ENCODE measurements at regions of chrX and their contacts with region 1.

Region 1: GRCh38 chrX:154748712-154749343 is 2.0 kb downstream of the GAB3 start:
- DNase-seq: peak; percentile 37 to 49 (median 43)
- ATAC-seq: peak; percentile 57 to 71 (median 62)
- H3K4me3 ChIP-seq: peak overlapping the region in 10 of 12 donors; percentile 49 to 81 (median 69)
- H3K27ac ChIP-seq: peak overlapping the region in 11 of 12 donors; percentile 26 to 95 (median 92)
- H3K4me1 ChIP-seq: peaks cover 0 to 29% (median 10%) of the 10 kb centered on the region in 12 donors
- H3K27me3 ChIP-seq: peaks cover 0 to 5% (median 0%) of the 10 kb centered on the region in 9 donors
- CTCF ChIP-seq: peak; percentile 58 to 88 (median 72)
- POLR2A ChIP-seq: no peak

Region 2: GRCh38 chrX:154695911-154696675 is 52.7 kb before region 1 on chrX:
- intact Hi-C with region 1: loop called in 5 of 10 experiments (anchors 5 to 10 kb)
- DNase-seq: peak in 2 of 5 donors; percentile 29
- ATAC-seq: peak; percentile 37 to 64 (median 50)
- H3K4me3 ChIP-seq: no peak overlapping the region
- H3K27ac ChIP-seq: peak overlapping the region in 11 of 12 donors; percentile 10 to 67 (median 51)
- H3K4me1 ChIP-seq: peaks cover 0 to 35% (median 14%) of the 10 kb centered on the region in 12 donors
- H3K27me3 ChIP-seq: peaks cover 0 to 4% (median 0%) of the 10 kb centered on the region in 9 donors
- CTCF ChIP-seq: no peak
- POLR2A ChIP-seq: no peak

Region 3: GRCh38 chrX:154714925-154715324 is 33.9 kb before region 1 on chrX:
- intact Hi-C with region 1: loop called in 5 of 10 experiments (anchors 2 to 5 kb)
- DNase-seq: no peak
- ATAC-seq: peak in 3 of 4 donors; percentile 59 to 73 (median 70)
- H3K4me3 ChIP-seq: no peak overlapping the region
- H3K27ac ChIP-seq: no peak overlapping the region
- H3K4me1 ChIP-seq: peaks cover 0 to 63% (median 35%) of the 10 kb centered on the region in 12 donors
- H3K27me3 ChIP-seq: peaks cover 0 to 6% (median 0%) of the 10 kb centered on the region in 9 donors
- CTCF ChIP-seq: peak; percentile 55 to 86 (median 70)
- POLR2A ChIP-seq: no peak

Region 4: GRCh38 chrX:154734061-154734781 is 14.6 kb before region 1 on chrX:
- intact Hi-C with region 1: loop called in 1 of 10 experiments (anchors 2 kb)
- DNase-seq: peak; percentile 33 to 65 (median 40)
- ATAC-seq: peak; percentile 13 to 60 (median 30)
- H3K4me3 ChIP-seq: peak overlapping the region in 1 of 12 donors; percentile 30
- H3K27ac ChIP-seq: peak overlapping the region; percentile 58 to 92 (median 79)
- H3K4me1 ChIP-seq: peaks cover 9 to 100% (median 92%) of the 10 kb centered on the region in 12 donors
- H3K27me3 ChIP-seq: no peaks in the 10 kb centered on the region
- CTCF ChIP-seq: no peak
- POLR2A ChIP-seq: no peak

Region 5: GRCh38 chrX:154840856-154841255 is 92.0 kb after region 1 on chrX:
- intact Hi-C with region 1: loop called in 1 of 10 experiments (anchors 5 kb)
- DNase-seq: no peak
- ATAC-seq: peak in 2 of 4 donors; percentile 50 to 57
- H3K4me3 ChIP-seq: no peak overlapping the region
- H3K27ac ChIP-seq: no peak overlapping the region
- H3K4me1 ChIP-seq: no peaks in the 10 kb centered on the region
- H3K27me3 ChIP-seq: no peaks in the 10 kb centered on the region
- CTCF ChIP-seq: peak in 11 of 12 donors; percentile 18 to 55 (median 40)
- POLR2A ChIP-seq: no peak

Region 6: GRCh38 chrX:154918060-154918483 is 169.2 kb after region 1 on chrX:
- intact Hi-C with region 1: no loop called
- DNase-seq: peak in 4 of 5 donors; percentile 26 to 54 (median 38)
- ATAC-seq: peak in 3 of 4 donors; percentile 62 to 73 (median 69)
- H3K4me3 ChIP-seq: peak overlapping the region in 6 of 12 donors; percentile 10 to 35 (median 29)
- H3K27ac ChIP-seq: no peak overlapping the region
- H3K4me1 ChIP-seq: no peaks in the 10 kb centered on the region
- H3K27me3 ChIP-seq: no peaks in the 10 kb centered on the region
- CTCF ChIP-seq: peak; percentile 27 to 62 (median 50)
- POLR2A ChIP-seq: no peak

Measured in heart left ventricle (tissue), 16 donors.